ENCODE measurements at regions of chr2 and their contacts with region 1.

Region 1: GRCh38 chr2:216679221-216680019 is 15.9 kb downstream of the IGFBP5 start:
- DNase-seq: no peak
- H3K4me3 ChIP-seq: no peak overlapping the region
- H3K27ac ChIP-seq: no peak overlapping the region
- H3K4me1 ChIP-seq: peaks cover 0 to 4% (median 2%) of the 10 kb centered on the region in 4 experiments; a peak in 4 of 7 replicates
- H3K27me3 ChIP-seq: no peaks in the 10 kb centered on the region
- CTCF ChIP-seq: no peak
- EP300 ChIP-seq: no peak
- POLR2A ChIP-seq: no peak
- RAD21 ChIP-seq: no peak

Region 2: DNA sequence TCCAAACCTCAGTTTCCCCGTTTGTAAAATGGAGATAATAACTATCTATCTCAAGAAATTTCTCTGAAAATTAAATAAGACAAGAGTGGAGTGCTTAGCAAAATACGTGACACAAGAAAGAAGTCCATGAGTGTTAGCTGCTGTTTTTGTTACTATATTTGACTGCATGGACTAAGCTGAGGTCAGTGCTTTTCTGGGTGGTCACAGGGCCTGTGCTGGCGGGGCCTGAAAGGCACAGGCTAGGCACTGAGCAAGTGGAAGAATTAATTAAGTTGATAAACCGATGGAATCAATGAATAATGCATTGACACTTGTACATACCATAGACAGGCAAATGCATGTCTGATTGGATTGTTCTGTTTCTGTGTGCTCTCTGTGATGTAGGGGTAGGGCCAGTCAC is 153.4 kb before region 1 on chr2:
- CTCF ChIA-PET with region 1: interaction called, 10 read pairs
- POLR2A ChIA-PET with region 1: no interaction called
- DNase-seq: no peak
- H3K4me3 ChIP-seq: no peak overlapping the region
- H3K27ac ChIP-seq: no peak overlapping the region
- H3K4me1 ChIP-seq: no peaks in the 10 kb centered on the region
- H3K27me3 ChIP-seq: peaks cover 0 to 1% (median 0%) of the 10 kb centered on the region in 4 experiments; a peak in 1 of 7 replicates
- CTCF ChIP-seq: no peak
- EP300 ChIP-seq: no peak
- POLR2A ChIP-seq: no peak
- RAD21 ChIP-seq: no peak

Region 3: DNA sequence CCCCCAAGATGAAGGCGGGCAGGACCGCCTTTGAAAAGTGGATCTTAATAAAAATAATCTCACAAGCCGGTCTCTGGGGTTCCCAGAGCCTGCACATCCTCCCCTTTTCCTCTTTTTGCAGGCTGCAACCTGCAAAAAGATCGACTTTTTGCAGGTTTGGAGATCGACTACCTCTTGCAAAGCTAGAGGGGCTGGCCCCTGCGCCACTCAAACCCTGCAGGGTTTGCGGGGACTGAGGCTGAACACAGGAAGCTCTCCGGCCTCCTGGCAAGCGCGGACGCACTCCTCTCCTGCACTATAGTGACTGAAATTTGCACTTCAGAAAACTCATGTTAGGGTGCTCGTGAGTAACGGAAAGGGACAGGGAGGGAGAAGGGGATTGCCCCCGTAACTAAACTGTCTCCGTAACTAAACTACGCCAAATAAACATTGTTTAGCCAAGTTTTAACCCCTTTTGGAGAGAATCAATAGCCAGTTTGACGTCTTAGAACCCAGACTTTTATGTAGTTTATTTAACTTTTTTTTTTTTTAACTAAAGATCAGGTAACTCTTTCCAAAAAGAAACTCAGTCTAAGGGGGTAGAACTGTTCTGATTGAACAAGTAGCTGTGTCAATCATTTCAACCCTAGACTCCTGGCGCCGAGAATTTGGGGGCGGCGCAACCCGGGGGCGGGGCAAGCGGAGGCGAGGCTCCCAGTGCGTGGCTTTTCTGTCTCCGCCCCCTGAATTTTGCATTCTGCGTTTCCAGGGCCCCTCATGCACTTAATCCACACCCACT is 13.4 kb after region 1 on chr2:
- CTCF ChIA-PET with region 1: interaction called, 41 read pairs
- POLR2A ChIA-PET with region 1: interaction called, 3 read pairs
- DNase-seq: peak in 1 of 2 experiments; percentile 89
- H3K4me3 ChIP-seq: peak overlapping the region; percentile 52 to 71 (median 66)
- H3K27ac ChIP-seq: no peak overlapping the region
- H3K4me1 ChIP-seq: peaks cover 12 to 27% (median 18%) of the 10 kb centered on the region in 4 experiments
- H3K27me3 ChIP-seq: peaks cover 0 to 25% (median 19%) of the 10 kb centered on the region in 4 experiments; a peak in 6 of 7 replicates
- CTCF ChIP-seq: no peak
- EP300 ChIP-seq: no peak
- POLR2A ChIP-seq: no peak
- RAD21 ChIP-seq: no peak